ENCODE measurements at regions of chr12 and their contacts with region 1.

Region 1: DNA sequence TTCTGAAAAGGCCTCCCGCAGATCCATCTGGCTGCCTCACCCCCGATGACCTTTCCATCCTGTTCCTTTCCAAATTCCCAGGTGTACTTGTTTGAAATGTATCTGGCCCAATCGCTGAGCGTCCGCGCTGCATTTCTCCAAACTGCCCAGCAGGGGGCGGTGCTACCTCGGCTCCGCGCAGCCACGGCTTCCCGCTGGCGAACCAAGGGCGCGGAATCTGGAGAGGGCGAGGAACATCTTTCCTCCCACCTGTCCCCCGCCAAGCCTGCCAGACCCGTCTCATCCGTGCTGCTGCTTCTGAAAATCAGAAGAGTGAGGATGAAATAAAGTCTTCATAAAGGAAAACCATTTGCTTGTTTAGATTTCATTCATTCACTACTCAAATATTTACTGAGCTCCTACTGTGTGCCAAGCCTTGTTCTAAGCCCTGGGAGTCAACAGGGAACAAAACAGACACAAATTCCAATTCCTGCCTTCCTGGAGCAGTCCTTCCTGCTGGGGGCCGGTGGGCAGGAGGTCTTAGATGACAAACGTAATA is 16.8 kb upstream of the MYL2 start:
- DNase-seq: peak; percentile 50
- H3K4me3 ChIP-seq: no peak overlapping the region
- H3K27ac ChIP-seq: no peak overlapping the region
- H3K4me1 ChIP-seq: peaks cover 0 to 6% (median 0%) of the 10 kb centered on the region in 4 donors
- H3K27me3 ChIP-seq: peaks cover 24% of the 10 kb centered on the region
- CTCF ChIP-seq: peak; percentile 72 to 96 (median 86)
- EP300 ChIP-seq: no peak
- POLR2A ChIP-seq: no peak

Region 2: GRCh38 chr12:111304642-111305071 is 367.5 kb after region 1 on chr12:
- in situ Hi-C with region 1: loop called in 3 of 4 experiments (anchors 10 to 25 kb)
- intact Hi-C with region 1: no loop called
- DNase-seq: no peak
- H3K4me3 ChIP-seq: no peak overlapping the region
- H3K27ac ChIP-seq: no peak overlapping the region
- H3K4me1 ChIP-seq: no peaks in the 10 kb centered on the region
- H3K27me3 ChIP-seq: no peaks in the 10 kb centered on the region
- CTCF ChIP-seq: peak in 4 of 5 experiments; percentile 36 to 57 (median 45)
- EP300 ChIP-seq: no peak
- POLR2A ChIP-seq: no peak

Region 3: GRCh38 chr12:112725391-112725790 is 1788.2 kb after region 1 on chr12:
- in situ Hi-C with region 1: no loop called
- intact Hi-C with region 1: loop called (anchors 10 kb)
- DNase-seq: no peak
- H3K4me3 ChIP-seq: no peak overlapping the region
- H3K27ac ChIP-seq: no peak overlapping the region
- H3K4me1 ChIP-seq: no peaks in the 10 kb centered on the region
- H3K27me3 ChIP-seq: peaks cover 4% of the 10 kb centered on the region
- CTCF ChIP-seq: no peak
- EP300 ChIP-seq: no peak
- POLR2A ChIP-seq: no peak

Measured in transverse colon (tissue), 4 donors.